CD4-positive, alpha-beta T cell (primary cell): ENCODE measurements at regions of chr3 and their contacts with region 1.

Region 1: DNA sequence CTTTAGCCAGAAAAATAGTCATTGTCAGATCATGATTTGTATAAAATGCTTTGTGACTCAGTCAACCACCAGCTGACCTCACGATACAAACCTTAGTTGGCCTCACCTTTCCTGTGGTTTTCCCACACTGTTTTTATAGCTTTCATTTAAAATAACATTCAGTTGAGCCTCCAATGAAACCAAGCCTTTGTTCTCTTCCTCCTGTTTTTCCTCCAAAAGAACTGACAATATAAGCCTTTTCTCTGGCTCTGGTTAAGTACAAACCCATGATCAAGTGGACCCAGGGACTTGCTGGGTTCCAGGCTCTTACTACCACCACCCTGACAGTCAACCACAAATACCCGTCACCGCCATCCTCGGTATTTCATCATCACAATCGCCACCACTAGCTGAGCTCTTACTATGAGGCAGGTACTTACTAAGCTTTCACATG is 81.7 kb downstream of the TAMM41 start:
- DNase-seq: peak in 2 of 14 experiments; percentile 23 to 30
- ATAC-seq: no peak
- H3K4me3 ChIP-seq: no peak overlapping the region
- H3K4me3 Mint-ChIP-seq: no peak overlapping the region
- H3K27ac ChIP-seq: no peak overlapping the region
- H3K27ac Mint-ChIP-seq: no peak overlapping the region
- H3K4me1 ChIP-seq: peaks cover 5% of the 10 kb centered on the region
- H3K4me1 Mint-ChIP-seq: peaks cover 10% of the 10 kb centered on the region
- H3K27me3 ChIP-seq: no peaks in the 10 kb centered on the region
- H3K27me3 Mint-ChIP-seq: no peaks in the 10 kb centered on the region
- CTCF ChIP-seq: no peak

Region 2: GRCh38 chr3:11846281-11847034 is 81.5 kb after region 1 on chr3 and contains the start of gene TAMM41:
- CTCF ChIA-PET with region 1: no interaction called
- POLR2A ChIA-PET with region 1: interaction called, 9 read pairs
- intact Hi-C with region 1: loop called in 1 of 2 experiments (anchors 5 kb)
- DNase-seq: peak; percentile 78 to 94 (median 87)
- ATAC-seq: peak; percentile 99
- H3K4me3 ChIP-seq: peak within 1 kb of the TSS; percentile 95
- H3K4me3 Mint-ChIP-seq: peak within 1 kb of the TSS; percentile 95
- H3K27ac ChIP-seq: peak within 1 kb of the TSS; percentile 59 to 69
- H3K27ac Mint-ChIP-seq: peak within 1 kb of the TSS; percentile 93
- H3K4me1 ChIP-seq: peaks cover 34% of the 10 kb centered on the region
- H3K4me1 Mint-ChIP-seq: peaks cover 44% of the 10 kb centered on the region
- H3K27me3 ChIP-seq: no peaks in the 10 kb centered on the region
- H3K27me3 Mint-ChIP-seq: no peaks in the 10 kb centered on the region
- CTCF ChIP-seq: peak; percentile 76
- total RNA-seq, gene TAMM41: 19.7 to 22.0 TPM